ENCODE measurements at regions of chr10 and their contacts with region 1.

Region 1: DNA sequence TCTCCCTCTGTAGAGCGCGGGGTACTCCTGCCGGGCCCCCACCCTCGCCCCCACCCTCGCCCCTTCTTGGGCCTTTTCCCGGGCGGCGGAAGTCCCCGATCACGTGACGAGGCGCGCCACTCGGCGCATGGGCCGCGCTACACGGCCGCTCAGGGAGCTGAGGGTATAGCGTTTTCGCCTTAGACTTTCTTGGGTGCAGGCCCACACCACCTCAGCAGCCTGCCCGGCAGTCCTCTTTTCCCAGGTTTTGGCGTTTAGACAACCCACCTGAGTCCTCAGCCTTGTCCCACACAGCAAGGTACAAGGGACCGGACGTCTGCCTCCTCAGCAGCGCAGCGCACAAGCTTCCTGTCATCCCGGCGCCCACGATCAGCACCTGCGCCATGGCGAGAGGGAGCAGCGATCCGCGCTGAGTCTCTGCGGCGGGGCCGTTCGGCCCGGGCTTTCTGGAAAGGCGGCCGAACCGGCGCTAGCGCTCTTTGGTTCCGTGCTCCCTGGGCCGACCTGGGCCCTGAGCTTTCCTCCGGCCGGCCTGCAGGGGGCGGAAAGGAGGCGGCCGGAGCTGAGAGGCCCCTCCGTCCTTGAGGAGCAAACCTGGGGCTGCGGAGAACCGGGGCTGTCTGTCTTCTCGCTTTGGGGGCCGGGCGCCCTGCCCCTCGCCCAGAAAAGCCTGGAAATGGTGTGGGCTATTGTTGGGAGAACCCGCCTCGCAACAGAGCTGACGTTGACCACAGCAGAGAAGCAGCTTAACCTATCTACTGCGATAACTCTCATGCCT is at the start of gene RNLS:
- DNase-seq: peak; percentile 37 to 78 (median 56)
- ATAC-seq: peak; percentile 84 to 90 (median 86)
- H3K4me3 ChIP-seq: peak within 1 kb of the TSS; percentile 81 to 84
- H3K4me3 Mint-ChIP-seq: peak within 1 kb of the TSS; percentile 87 to 92 (median 91)
- H3K27ac ChIP-seq: peak within 1 kb of the TSS; percentile 85
- H3K27ac Mint-ChIP-seq: peak within 1 kb of the TSS; percentile 91 to 95
- H3K4me1 ChIP-seq: peaks cover 5 to 12% of the 10 kb centered on the region in 2 experiments
- H3K4me1 Mint-ChIP-seq: peaks cover 8 to 16% (median 11%) of the 10 kb centered on the region in 3 donors
- H3K27me3 ChIP-seq: peaks cover 0 to 3% of the 10 kb centered on the region in 2 experiments
- H3K27me3 Mint-ChIP-seq: peaks cover 0 to 3% of the 10 kb centered on the region in 2 donors
- total RNA-seq, gene RNLS: 1.8 to 4.5 (median 3.2) TPM

Region 2: GRCh38 chr10:87817609-87818504 is 765.1 kb before region 1 on chr10 and contains the start of gene ATAD1:
- CTCF ChIA-PET with region 1: interaction called in 1 of 2 experiments, 10 read pairs
- POLR2A ChIA-PET with region 1: interaction called in 1 of 2 experiments, 4 read pairs
- DNase-seq: peak; percentile 80 to 95 (median 87)
- ATAC-seq: peak; percentile 88 to 93 (median 92)
- H3K4me3 ChIP-seq: peak within 1 kb of the TSS; percentile 79 to 87
- H3K4me3 Mint-ChIP-seq: peak within 1 kb of the TSS; percentile 90 to 99 (median 97)
- H3K27ac ChIP-seq: peak within 1 kb of the TSS; percentile 82
- H3K27ac Mint-ChIP-seq: peak within 1 kb of the TSS; percentile 94 to 98
- H3K4me1 ChIP-seq: peaks cover 7 to 27% of the 10 kb centered on the region in 2 experiments
- H3K4me1 Mint-ChIP-seq: peaks cover 38 to 40% (median 39%) of the 10 kb centered on the region in 3 donors
- H3K27me3 ChIP-seq: no peaks in the 10 kb centered on the region
- H3K27me3 Mint-ChIP-seq: no peaks in the 10 kb centered on the region
- total RNA-seq, gene ATAD1: 35.2 to 43.8 (median 42.1) TPM

Region 3: GRCh38 chr10:88508796-88509195 is 74.2 kb before region 1 on chr10:
- CTCF ChIA-PET with region 1: no interaction called
- POLR2A ChIA-PET with region 1: interaction called in 1 of 2 experiments, 12 read pairs
- DNase-seq: no peak
- ATAC-seq: no peak
- H3K4me3 ChIP-seq: no peak overlapping the region
- H3K4me3 Mint-ChIP-seq: no peak overlapping the region
- H3K27ac ChIP-seq: no peak overlapping the region
- H3K27ac Mint-ChIP-seq: no peak overlapping the region
- H3K4me1 ChIP-seq: no peaks in the 10 kb centered on the region
- H3K4me1 Mint-ChIP-seq: no peaks in the 10 kb centered on the region
- H3K27me3 ChIP-seq: no peaks in the 10 kb centered on the region
- H3K27me3 Mint-ChIP-seq: peaks cover 0 to 5% of the 10 kb centered on the region in 2 donors

Region 4: GRCh38 chr10:88565072-88565471 is 17.9 kb before region 1 on chr10:
- CTCF ChIA-PET with region 1: interaction called, 5 to 10 read pairs
- POLR2A ChIA-PET with region 1: no interaction called
- DNase-seq: peak in 1 of 35 experiments; percentile 24
- ATAC-seq: peak in 1 of 4 experiments; percentile 48
- H3K4me3 ChIP-seq: no peak overlapping the region
- H3K4me3 Mint-ChIP-seq: no peak overlapping the region
- H3K27ac ChIP-seq: no peak overlapping the region
- H3K27ac Mint-ChIP-seq: no peak overlapping the region
- H3K4me1 ChIP-seq: peaks cover 0 to 4% of the 10 kb centered on the region in 2 experiments
- H3K4me1 Mint-ChIP-seq: peaks cover 2 to 5% (median 5%) of the 10 kb centered on the region in 3 donors
- H3K27me3 ChIP-seq: no peaks in the 10 kb centered on the region
- H3K27me3 Mint-ChIP-seq: no peaks in the 10 kb centered on the region

Region 5: GRCh38 chr10:88624840-88625239 is 41.8 kb after region 1 on chr10:
- CTCF ChIA-PET with region 1: no interaction called
- POLR2A ChIA-PET with region 1: no interaction called
- DNase-seq: no peak
- ATAC-seq: no peak
- H3K4me3 ChIP-seq: no peak overlapping the region
- H3K4me3 Mint-ChIP-seq: no peak overlapping the region
- H3K27ac ChIP-seq: no peak overlapping the region
- H3K27ac Mint-ChIP-seq: no peak overlapping the region
- H3K4me1 ChIP-seq: no peaks in the 10 kb centered on the region
- H3K4me1 Mint-ChIP-seq: no peaks in the 10 kb centered on the region
- H3K27me3 ChIP-seq: no peaks in the 10 kb centered on the region
- H3K27me3 Mint-ChIP-seq: no peaks in the 10 kb centered on the region

Region 6: GRCh38 chr10:89404104-89405047 is 821.4 kb after region 1 on chr10:
- CTCF ChIA-PET with region 1: no interaction called
- POLR2A ChIA-PET with region 1: no interaction called
- DNase-seq: no peak
- ATAC-seq: no peak
- H3K4me3 ChIP-seq: no peak overlapping the region
- H3K4me3 Mint-ChIP-seq: no peak overlapping the region
- H3K27ac ChIP-seq: no peak overlapping the region
- H3K27ac Mint-ChIP-seq: peak overlapping the region; percentile 37 to 72
- H3K4me1 ChIP-seq: no peaks in the 10 kb centered on the region
- H3K4me1 Mint-ChIP-seq: peaks cover 12 to 29% (median 26%) of the 10 kb centered on the region in 3 donors
- H3K27me3 ChIP-seq: no peaks in the 10 kb centered on the region
- H3K27me3 Mint-ChIP-seq: no peaks in the 10 kb centered on the region

Region 7: DNA sequence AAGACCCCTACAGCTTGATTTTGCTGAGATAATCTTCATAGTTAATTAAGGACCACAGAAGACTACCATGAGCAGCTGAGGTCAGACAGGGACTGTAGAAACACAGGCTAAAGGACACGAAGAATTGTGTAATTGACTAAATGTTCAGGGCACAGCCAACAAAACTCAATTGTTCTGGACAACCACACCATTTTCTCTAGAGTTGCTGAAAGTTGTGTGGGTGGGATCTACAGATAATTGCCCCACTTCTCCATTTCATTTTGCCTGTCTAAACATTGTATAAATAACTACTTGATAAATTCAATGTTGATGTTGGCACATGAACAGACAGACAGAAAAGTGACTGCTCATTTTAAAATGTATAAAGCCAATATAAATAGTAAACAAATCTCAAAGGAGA is 991.4 kb after region 1 on chr10:
- CTCF ChIA-PET with region 1: no interaction called
- POLR2A ChIA-PET with region 1: no interaction called
- DNase-seq: no peak
- ATAC-seq: no peak
- H3K4me3 ChIP-seq: no peak overlapping the region
- H3K4me3 Mint-ChIP-seq: no peak overlapping the region
- H3K27ac ChIP-seq: no peak overlapping the region
- H3K27ac Mint-ChIP-seq: no peak overlapping the region
- H3K4me1 ChIP-seq: no peaks in the 10 kb centered on the region
- H3K4me1 Mint-ChIP-seq: no peaks in the 10 kb centered on the region
- H3K27me3 ChIP-seq: no peaks in the 10 kb centered on the region
- H3K27me3 Mint-ChIP-seq: no peaks in the 10 kb centered on the region